ENCODE measurements at regions of chr7 and their contacts with region 1.

Region 1: DNA sequence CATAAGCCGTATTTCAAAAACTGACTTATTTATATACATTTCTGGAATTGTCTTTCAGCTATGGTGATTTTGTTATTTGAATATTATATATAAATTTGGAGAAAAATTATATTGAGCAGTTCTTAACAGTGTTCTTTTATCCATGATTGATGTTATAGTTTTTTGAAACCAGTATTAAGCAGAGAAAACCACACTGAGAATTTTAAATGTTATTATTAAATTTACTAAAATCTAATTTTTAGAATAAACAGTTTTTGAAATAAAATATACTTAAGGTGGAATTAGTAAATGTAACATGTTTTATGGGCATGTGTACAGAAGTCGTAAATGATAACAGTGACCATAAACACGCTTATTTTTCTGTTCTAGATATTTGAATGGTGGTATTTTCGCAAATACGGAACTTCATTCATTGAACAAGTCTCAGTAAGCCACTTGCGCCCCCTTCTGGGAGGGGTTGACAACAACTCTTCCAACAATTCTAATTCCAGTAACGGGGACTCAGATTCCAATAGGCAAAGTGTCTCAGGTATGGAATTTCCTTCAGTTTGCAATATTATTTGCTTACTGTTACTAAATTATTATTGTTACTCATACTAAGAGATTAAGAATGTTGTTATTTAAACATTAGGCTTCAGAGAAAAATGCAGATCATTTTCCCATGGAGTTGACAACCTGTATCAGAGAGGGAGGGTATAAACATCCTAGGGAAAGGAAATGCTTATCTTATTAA is 166.1 kb downstream of the ST7 start:
- DNase-seq: peak; percentile 55 to 90 (median 76)
- ATAC-seq: peak; percentile 65 to 88 (median 81)
- H3K4me3 ChIP-seq: no peak overlapping the region
- H3K27ac ChIP-seq: no peak overlapping the region
- H3K4me1 ChIP-seq: peaks cover 0 to 13% (median 9%) of the 10 kb centered on the region in 3 donors
- H3K27me3 ChIP-seq: no peaks in the 10 kb centered on the region
- CTCF ChIP-seq: peak; percentile 50 to 70 (median 62)

Region 2: GRCh38 chr7:116929914-116930913 is 189.1 kb before region 1 on chr7:
- intact Hi-C with region 1: loop called in 1 of 3 experiments (anchors 5 kb)
- DNase-seq: peak; percentile 47 to 92 (median 78)
- ATAC-seq: peak; percentile 78 to 98 (median 96)
- H3K4me3 ChIP-seq: no peak overlapping the region
- H3K27ac ChIP-seq: no peak overlapping the region
- H3K4me1 ChIP-seq: no peaks in the 10 kb centered on the region
- H3K27me3 ChIP-seq: no peaks in the 10 kb centered on the region
- CTCF ChIP-seq: peak; percentile 84 to 95 (median 86)

Region 3: GRCh38 chr7:116984917-116985316 is 134.4 kb before region 1 on chr7:
- intact Hi-C with region 1: loop called in 2 of 3 experiments (anchors 5 kb)
- DNase-seq: no peak
- ATAC-seq: peak; percentile 61 to 84 (median 74)
- H3K4me3 ChIP-seq: no peak overlapping the region
- H3K27ac ChIP-seq: no peak overlapping the region
- H3K4me1 ChIP-seq: no peaks in the 10 kb centered on the region
- H3K27me3 ChIP-seq: no peaks in the 10 kb centered on the region
- CTCF ChIP-seq: peak in 3 of 4 donors; percentile 39 to 56 (median 53)